Activated T-helper 1 cell treated with anti-CD3 and anti-CD28 coated beads, Interleukin-12 subunit alpha, Interleukin-12 subunit beta, Interleukin-2, Interleukin-4 antibody, amounts not matched to agents 30 ng/mL and 10 ng/mL and 1 ng/mL, durations not matched to agents 14 hours and 24 hours and 36 hours (primary cell): ENCODE measurements at regions of chr20 and their contacts with region 1.

Region 1: GRCh38 chr20:11204926-11205768 is 531.3 kb upstream of the JAG1 start:
- DNase-seq: no peak
- H3K4me3 Mint-ChIP-seq: no peak overlapping the region
- H3K27ac Mint-ChIP-seq: no peak overlapping the region
- H3K4me1 Mint-ChIP-seq: no peaks in the 10 kb centered on the region
- H3K27me3 Mint-ChIP-seq: no peaks in the 10 kb centered on the region

Region 2: DNA sequence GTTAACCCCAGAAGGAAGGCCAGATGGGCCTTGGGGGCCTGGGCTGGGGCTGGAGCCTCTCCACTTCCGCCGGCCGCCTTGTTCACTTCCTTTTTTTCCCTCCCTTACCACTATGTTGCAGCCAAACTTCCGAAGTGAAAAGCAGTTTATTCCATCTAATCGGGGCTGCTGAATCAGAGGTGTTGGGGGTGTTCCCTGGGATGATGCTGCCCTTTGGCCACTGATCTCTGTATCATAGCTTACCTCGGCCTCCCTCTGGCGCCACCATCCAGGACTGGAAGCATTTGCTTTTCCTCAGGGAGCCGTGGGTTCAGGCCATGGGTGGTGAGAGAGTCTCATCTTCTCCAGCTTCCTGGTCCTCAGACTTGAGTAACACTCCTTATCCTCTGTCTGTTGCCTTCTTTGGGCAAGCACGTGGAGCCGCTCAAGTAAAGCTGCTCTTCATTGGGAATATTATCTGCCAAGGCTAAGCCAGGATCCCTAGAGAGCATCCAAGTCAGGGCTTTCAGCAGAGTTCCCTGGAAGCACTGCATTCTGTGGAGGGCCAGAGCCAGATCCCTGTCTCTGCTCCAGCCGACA is 730.5 kb before region 1 on chr20:
- intact Hi-C with region 1: loop called (anchors 5 kb)
- DNase-seq: no peak
- H3K4me3 Mint-ChIP-seq: no peak overlapping the region
- H3K27ac Mint-ChIP-seq: no peak overlapping the region
- H3K4me1 Mint-ChIP-seq: peaks cover 24% of the 10 kb centered on the region
- H3K27me3 Mint-ChIP-seq: no peaks in the 10 kb centered on the region

Region 3: DNA sequence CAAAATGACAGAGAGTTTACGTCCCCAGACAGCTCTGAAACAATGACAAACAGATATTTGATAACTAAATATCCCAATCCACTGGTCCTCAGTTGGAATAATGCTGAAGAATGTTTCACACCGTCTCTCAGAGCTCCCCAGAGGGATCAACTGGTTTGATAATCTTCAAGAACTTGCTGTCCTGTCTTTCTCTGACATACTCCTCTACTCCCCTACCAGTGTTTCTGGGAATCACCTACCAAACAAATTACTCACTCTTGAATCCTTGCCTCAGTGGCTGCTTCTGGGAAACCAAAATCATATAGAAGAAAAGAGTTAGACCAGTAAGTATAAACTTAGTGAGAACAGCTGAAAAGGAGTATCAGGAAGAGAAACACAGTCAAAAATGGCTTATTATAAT is 61.7 kb before region 1 on chr20:
- intact Hi-C with region 1: no loop called
- DNase-seq: no peak
- H3K4me3 Mint-ChIP-seq: no peak overlapping the region
- H3K27ac Mint-ChIP-seq: no peak overlapping the region
- H3K4me1 Mint-ChIP-seq: no peaks in the 10 kb centered on the region
- H3K27me3 Mint-ChIP-seq: no peaks in the 10 kb centered on the region

Region 4: DNA sequence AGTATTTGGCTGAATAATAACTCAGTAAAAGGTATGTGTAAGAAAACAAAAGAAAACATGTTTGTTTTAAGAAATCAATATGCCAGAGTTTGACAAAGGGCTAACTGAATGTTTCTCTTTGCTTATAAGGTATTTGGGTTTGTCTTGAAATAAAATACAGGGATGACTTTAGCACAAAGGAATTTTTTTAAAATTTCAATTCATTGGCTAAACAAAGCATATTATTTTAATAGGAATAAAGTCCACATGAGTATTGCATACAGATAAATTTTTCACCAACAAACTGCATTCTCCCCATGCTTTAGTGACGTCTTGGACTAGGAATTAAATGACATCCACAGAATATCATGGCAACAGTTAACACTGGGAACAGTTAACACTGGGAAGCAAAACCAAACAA is 51.3 kb before region 1 on chr20:
- intact Hi-C with region 1: no loop called
- DNase-seq: no peak
- H3K4me3 Mint-ChIP-seq: no peak overlapping the region
- H3K27ac Mint-ChIP-seq: no peak overlapping the region
- H3K4me1 Mint-ChIP-seq: no peaks in the 10 kb centered on the region
- H3K27me3 Mint-ChIP-seq: no peaks in the 10 kb centered on the region